Activated naive CD4-positive, alpha-beta T cell treated with anti-CD3 and anti-CD28 coated beads for 36 hours (primary cell): ENCODE measurements at regions of chr3 and their contacts with region 1.

Region 1: DNA sequence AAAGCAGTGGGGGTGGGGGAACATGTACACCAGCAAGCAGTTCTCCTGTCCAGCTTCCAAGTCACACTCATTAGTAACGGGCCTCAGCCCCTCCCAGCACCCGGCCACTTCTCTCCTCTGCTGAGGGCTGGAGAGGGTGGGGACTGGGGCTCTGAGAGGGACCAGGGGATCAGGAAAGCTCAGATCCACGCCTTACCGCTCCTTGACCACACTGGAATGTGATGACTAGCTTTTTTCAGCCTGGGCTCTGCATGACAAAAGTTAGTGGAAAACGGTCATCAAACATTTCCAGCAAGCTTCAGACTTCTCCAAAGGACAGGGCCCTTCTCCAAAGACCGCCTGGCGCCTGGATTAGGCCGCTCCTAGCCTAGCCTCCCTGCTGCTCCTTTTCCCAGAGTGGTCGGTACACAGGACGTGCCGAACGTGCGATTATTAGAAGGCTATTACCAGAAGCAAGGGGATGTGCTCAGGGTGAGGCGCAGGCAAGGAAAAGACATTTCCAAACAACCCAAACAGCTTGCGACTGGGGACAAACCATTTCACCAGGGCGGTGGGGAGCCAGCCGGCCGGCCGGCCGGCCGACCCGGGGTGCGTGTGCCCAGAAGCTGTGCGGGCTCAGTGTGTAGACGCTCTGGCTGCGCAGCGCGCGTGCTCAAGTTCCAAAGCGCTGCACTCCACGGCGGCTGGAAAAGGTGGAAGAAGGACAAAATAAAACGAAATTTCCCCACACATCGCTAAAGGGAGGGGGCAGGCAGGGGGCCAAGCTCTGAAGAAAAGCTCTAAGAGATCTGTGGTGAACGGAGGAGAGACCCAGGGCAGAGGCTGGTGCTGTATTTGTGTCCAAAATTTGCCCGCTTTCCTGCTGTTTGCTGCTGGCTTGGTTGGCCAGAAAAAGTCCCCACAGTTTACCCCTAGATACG is 51.0 kb upstream of the SSR3 start:
- DNase-seq: no peak
- H3K4me3 Mint-ChIP-seq: peak overlapping the region; percentile 68
- H3K27ac Mint-ChIP-seq: no peak overlapping the region
- H3K4me1 Mint-ChIP-seq: peaks cover 19% of the 10 kb centered on the region
- H3K27me3 Mint-ChIP-seq: peaks cover 31% of the 10 kb centered on the region

Region 2: DNA sequence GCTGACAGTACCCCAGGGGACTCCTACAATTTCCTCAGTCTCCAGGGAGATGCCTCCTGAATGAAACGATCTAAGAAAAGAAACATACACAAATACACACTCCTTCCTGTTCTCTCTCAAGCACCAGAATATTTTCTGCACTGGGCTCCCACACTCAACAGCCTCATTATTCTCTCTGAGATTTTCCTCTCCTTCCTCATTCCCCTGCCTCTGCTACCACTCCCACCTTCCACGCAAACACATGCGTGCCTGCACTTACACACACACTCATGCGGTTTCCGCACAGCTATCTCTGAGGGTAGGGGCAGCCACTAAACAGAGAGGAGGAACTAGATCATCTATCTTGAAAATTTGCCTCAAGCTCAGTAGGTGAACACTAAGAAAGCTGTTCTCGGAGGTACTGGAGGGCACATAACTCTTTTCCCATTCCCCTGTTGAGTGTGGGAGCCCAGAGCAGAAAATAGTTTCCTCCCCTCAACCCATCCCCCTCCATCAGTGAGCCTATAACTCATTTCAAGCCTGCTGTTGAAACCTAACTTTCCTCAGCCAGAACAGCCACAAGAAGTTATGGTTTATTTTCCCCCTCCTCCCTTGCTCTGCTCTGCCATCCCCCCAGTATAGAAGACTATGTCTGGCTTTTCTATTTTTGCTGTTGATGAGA is 37.9 kb after region 1 on chr3:
- CTCF ChIA-PET with region 1: no interaction called
- intact Hi-C with region 1: loop called (anchors 2 kb)
- DNase-seq: peak; percentile 66
- H3K4me3 Mint-ChIP-seq: peak overlapping the region; percentile 40
- H3K27ac Mint-ChIP-seq: peak overlapping the region; percentile 48
- H3K4me1 Mint-ChIP-seq: peaks cover 11% of the 10 kb centered on the region
- H3K27me3 Mint-ChIP-seq: peaks cover 2% of the 10 kb centered on the region

Region 3: DNA sequence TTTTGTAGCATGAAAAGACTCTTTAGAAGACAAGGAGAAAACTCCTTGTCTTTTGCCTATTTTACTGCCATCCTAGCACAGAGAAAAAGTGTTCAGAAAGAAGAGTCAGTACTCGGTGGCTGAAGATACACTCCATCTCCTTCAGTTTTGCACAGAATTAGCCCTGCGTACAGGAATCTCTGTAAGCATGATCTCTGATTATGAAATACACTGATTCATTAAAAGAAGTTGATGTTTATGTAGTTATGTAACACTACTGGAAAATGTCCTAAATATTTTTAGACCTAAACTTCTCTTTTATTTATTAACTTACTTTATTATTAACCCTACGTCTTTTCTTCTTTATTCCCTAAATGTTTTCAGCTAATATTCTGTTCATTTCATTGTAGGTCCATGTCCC is 358.6 kb after region 1 on chr3:
- CTCF ChIA-PET with region 1: no interaction called
- intact Hi-C with region 1: no loop called
- DNase-seq: no peak
- H3K4me3 Mint-ChIP-seq: no peak overlapping the region
- H3K27ac Mint-ChIP-seq: no peak overlapping the region
- H3K4me1 Mint-ChIP-seq: no peaks in the 10 kb centered on the region
- H3K27me3 Mint-ChIP-seq: no peaks in the 10 kb centered on the region